ENCODE measurements at regions of chr5 and their contacts with region 1.

Region 1: DNA sequence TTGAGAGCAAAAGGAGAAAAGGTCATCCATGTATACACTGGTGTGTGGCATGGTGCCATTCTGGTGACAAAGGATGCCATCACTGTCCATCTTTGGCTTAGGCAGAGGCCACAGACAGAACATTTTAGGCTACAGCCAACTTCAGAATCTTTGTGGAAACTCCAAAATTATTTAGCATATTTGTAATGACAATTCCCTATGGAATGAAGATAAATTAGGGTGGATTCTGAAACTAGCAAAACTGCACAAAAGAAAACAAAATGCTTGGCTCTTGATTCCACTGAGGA is 92.5 kb downstream of the FBXW11 start:
- DNase-seq: no peak
- H3K4me3 ChIP-seq: no peak overlapping the region
- CTCF ChIP-seq: no peak

Region 2: DNA sequence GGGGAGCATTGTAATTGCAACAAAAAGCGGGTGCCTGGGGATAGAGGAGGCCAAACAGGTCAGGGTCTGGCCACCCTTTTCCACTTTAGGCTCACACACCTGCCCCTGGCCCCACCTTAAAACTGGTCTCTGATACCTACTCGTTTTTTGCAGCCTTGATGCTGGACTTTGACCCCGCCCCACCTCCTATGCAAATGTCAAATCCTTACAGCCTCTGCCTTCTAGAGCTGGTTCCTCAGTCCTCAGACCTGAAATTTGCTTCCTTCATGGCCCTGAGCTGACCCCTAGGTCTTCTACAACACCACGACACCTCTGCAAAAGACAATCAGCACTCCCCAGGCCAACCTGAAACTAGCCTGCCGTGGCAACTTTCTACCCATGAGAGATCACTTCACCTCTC is 90.7 kb before region 1 on chr5:
- CTCF ChIA-PET with region 1: no interaction called
- POLR2A ChIA-PET with region 1: no interaction called
- DNase-seq: no peak
- H3K4me3 ChIP-seq: no peak overlapping the region
- CTCF ChIP-seq: no peak

Region 3: DNA sequence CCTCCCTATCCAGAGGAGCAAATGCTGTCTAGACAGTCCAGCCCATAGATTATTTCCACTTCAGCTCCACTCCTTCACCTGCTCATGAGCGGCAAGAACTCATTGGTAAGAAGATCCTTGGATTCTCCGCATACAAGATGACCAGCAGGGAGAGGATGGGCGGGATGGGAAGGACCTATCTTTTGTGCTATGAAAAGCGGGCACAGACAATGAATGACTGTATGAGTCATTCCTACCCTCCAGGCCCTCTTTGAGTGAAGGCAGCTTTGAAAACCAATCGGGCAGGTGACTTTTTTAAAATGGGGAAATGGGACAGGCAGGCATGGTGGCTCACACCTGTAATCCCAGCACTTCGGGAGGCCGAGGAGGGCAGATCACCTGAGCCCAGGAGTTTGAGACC is 78.9 kb before region 1 on chr5:
- CTCF ChIA-PET with region 1: no interaction called
- POLR2A ChIA-PET with region 1: no interaction called
- DNase-seq: no peak
- H3K4me3 ChIP-seq: no peak overlapping the region
- CTCF ChIP-seq: no peak

Region 4: DNA sequence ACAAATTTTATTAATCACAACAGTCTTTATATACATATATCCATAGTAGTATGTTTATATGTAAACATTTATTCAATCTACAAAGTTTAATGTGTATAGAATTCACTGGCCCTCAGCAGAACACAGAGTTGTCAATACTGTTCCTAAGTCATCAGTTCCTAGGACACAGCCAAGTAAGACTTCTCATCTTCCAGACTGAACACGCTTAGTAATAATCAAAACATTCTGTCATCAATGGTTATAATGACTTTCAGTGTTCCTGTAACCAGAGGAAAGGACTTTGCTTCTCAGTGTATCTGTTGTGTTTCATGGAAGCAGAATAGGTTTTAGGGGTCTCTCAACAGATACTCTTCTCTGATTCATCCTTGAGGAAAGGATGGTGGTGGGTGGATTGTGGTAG is 46.1 kb before region 1 on chr5:
- CTCF ChIA-PET with region 1: no interaction called
- POLR2A ChIA-PET with region 1: no interaction called
- DNase-seq: no peak
- H3K4me3 ChIP-seq: no peak overlapping the region
- CTCF ChIP-seq: no peak

Region 5: GRCh38 chr5:171927345-171927941 is 13.5 kb after region 1 on chr5:
- CTCF ChIA-PET with region 1: interaction called, 40 read pairs
- POLR2A ChIA-PET with region 1: no interaction called
- DNase-seq: no peak
- H3K4me3 ChIP-seq: no peak overlapping the region
- CTCF ChIP-seq: peak; percentile 22

Region 6: GRCh38 chr5:171945066-171945465 is 31.1 kb after region 1 on chr5:
- CTCF ChIA-PET with region 1: interaction called, 12 read pairs
- POLR2A ChIA-PET with region 1: no interaction called
- DNase-seq: no peak
- H3K4me3 ChIP-seq: no peak overlapping the region
- CTCF ChIP-seq: no peak

Region 7: DNA sequence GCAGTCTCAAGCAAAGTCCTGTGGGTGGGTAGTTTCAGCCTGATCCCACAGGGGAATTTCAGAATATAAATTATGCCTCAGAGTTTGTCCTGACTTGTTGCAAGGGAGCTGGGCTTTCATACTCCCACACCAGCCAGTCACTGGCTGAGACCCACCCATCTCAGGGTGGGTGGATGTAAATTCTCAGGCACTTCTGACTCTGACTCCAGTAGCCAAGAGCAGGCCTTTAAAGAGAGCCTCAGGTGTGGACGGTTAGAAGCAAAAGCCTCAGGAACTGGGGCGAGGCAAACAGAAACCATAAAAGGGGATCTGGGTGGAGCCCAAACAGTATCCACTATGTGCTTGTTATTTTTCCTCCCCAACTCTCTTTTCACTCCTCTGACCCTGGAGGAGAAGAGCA is 121.1 kb after region 1 on chr5:
- CTCF ChIA-PET with region 1: interaction called, 184 read pairs
- POLR2A ChIA-PET with region 1: interaction called, 4 read pairs
- DNase-seq: no peak
- H3K4me3 ChIP-seq: no peak overlapping the region
- CTCF ChIP-seq: no peak

Region 8: DNA sequence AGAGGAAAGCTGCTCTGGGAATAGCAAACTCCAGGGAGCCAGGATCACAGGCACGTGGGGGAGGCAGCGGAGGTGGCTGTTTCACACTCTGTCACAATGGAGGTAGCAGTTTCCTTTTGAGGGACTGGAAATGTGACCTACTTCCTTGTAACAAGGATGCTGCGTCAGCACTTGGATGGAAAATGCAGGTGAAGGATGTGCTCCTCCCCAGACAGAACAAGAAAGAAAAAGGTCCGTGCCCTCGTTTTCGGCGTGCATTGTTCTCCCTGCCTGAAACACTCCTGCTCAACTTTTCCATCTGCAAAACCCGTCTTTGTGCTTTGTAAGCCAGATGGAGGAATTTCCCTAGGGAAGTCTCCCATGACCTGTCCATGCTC is 595.5 kb after region 1 on chr5:
- CTCF ChIA-PET with region 1: no interaction called
- POLR2A ChIA-PET with region 1: no interaction called
- DNase-seq: no peak
- H3K4me3 ChIP-seq: no peak overlapping the region
- CTCF ChIP-seq: no peak